ENCODE measurements at regions of chr1 and their contacts with region 1.

Region 1: DNA sequence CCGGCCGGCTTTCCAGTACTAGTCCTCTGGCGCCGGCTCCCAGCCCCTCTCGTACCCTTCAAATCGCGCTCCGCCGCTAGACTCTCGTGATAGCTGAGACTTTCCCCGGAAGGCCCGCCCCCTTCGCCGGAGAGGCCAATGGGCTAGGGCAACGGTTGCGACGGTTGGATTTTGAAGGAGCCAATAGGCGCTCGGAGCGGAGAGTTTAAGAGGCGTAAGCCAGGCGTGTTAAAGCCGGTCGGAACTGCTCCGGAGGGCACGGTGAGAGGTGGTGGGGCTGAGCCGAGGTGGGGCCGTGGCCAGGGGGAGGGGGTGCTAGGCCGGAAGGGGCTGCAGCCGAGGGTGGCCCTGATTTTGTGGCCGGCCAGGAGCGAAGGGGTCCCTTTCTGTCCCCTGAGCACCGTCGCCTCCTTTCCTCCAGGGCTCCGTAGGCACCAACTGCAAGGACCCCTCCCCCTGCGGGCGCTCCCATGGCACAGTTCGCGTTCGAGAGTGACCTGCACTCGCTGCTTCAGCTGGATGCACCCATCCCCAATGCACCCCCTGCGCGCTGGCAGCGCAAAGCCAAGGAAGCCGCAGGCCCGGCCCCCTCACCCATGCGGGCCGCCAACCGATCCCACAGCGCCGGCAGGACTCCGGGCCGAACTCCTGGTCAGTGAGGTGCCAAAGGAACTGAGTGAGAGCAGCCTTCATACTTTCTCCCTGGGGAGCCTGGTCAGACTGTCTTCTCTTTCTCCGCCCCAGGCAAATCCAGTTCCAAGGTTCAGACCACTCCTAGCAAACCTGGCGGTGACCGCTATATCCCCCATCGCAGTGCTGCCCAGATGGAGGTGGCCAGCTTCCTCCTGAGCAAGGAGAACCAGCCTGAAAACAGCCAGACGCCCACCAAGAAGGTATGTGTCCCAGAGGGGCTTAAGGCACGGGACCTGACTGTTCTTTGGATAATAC is at the start of gene CDC20:
- DNase-seq: peak; percentile 95
- ATAC-seq: peak; percentile 99
- H3K4me3 ChIP-seq: peak within 1 kb of the TSS; percentile 69 to 81 (median 73)
- H3K4me3 Mint-ChIP-seq: peak within 1 kb of the TSS; percentile 89
- H3K27ac ChIP-seq: peak within 1 kb of the TSS; percentile 48 to 79
- H3K27ac Mint-ChIP-seq: peak within 1 kb of the TSS; percentile 81
- H3K4me1 ChIP-seq: peaks cover 9 to 15% of the 10 kb centered on the region in 2 donors
- H3K4me1 Mint-ChIP-seq: peaks cover 18% of the 10 kb centered on the region
- H3K27me3 ChIP-seq: no peaks in the 10 kb centered on the region
- H3K27me3 Mint-ChIP-seq: no peaks in the 10 kb centered on the region
- CTCF ChIP-seq: no peak
- total RNA-seq, gene CDC20: 1.1 and 2.1 TPM in 2 replicates

Region 2: GRCh38 chr1:42657971-42658879 is 700.8 kb before region 1 on chr1 and contains the start of gene PPIH:
- CTCF ChIA-PET with region 1: no interaction called
- POLR2A ChIA-PET with region 1: no interaction called
- intact Hi-C with region 1: loop called (anchors 5 kb)
- DNase-seq: peak; percentile 94
- ATAC-seq: peak; percentile 99
- H3K4me3 ChIP-seq: peak within 1 kb of the TSS; percentile 45 to 90 (median 84)
- H3K4me3 Mint-ChIP-seq: peak within 1 kb of the TSS; percentile 99
- H3K27ac ChIP-seq: peak within 1 kb of the TSS; percentile 62 to 76
- H3K27ac Mint-ChIP-seq: peak within 1 kb of the TSS; percentile 93
- H3K4me1 ChIP-seq: peaks cover 15 to 22% of the 10 kb centered on the region in 2 donors
- H3K4me1 Mint-ChIP-seq: peaks cover 32% of the 10 kb centered on the region
- H3K27me3 ChIP-seq: no peaks in the 10 kb centered on the region
- H3K27me3 Mint-ChIP-seq: no peaks in the 10 kb centered on the region
- CTCF ChIP-seq: no peak
- total RNA-seq, gene PPIH: 48.8 and 50.3 TPM in 2 replicates

Region 3: GRCh38 chr1:43348809-43349583 is 10.0 kb before region 1 on chr1:
- CTCF ChIA-PET with region 1: interaction called, 4 read pairs
- POLR2A ChIA-PET with region 1: interaction called, 6 read pairs
- intact Hi-C with region 1: loop called (anchors 1 kb)
- DNase-seq: peak; percentile 78
- ATAC-seq: peak; percentile 84
- H3K4me3 ChIP-seq: peak overlapping the region in 4 of 5 experiments; percentile 34 to 64 (median 46)
- H3K4me3 Mint-ChIP-seq: peak overlapping the region; percentile 89
- H3K27ac ChIP-seq: peak overlapping the region; percentile 80 to 87
- H3K27ac Mint-ChIP-seq: peak overlapping the region; percentile 97
- H3K4me1 ChIP-seq: peaks cover 4 to 5% of the 10 kb centered on the region in 2 donors
- H3K4me1 Mint-ChIP-seq: peaks cover 13% of the 10 kb centered on the region
- H3K27me3 ChIP-seq: no peaks in the 10 kb centered on the region
- H3K27me3 Mint-ChIP-seq: no peaks in the 10 kb centered on the region
- CTCF ChIP-seq: no peak

Region 4: GRCh38 chr1:43414634-43415223 is 55.7 kb after region 1 on chr1:
- CTCF ChIA-PET with region 1: interaction called, 12 read pairs
- POLR2A ChIA-PET with region 1: interaction called, 4 read pairs
- intact Hi-C with region 1: no loop called
- DNase-seq: peak; percentile 79
- ATAC-seq: peak; percentile 96
- H3K4me3 ChIP-seq: no peak overlapping the region
- H3K4me3 Mint-ChIP-seq: no peak overlapping the region
- H3K27ac ChIP-seq: no peak overlapping the region
- H3K27ac Mint-ChIP-seq: peak overlapping the region; percentile 34
- H3K4me1 ChIP-seq: no peaks in the 10 kb centered on the region
- H3K4me1 Mint-ChIP-seq: peaks cover 3% of the 10 kb centered on the region
- H3K27me3 ChIP-seq: no peaks in the 10 kb centered on the region
- H3K27me3 Mint-ChIP-seq: no peaks in the 10 kb centered on the region
- CTCF ChIP-seq: peak; percentile 79

Region 5: GRCh38 chr1:43531906-43532584 is 173.0 kb after region 1 on chr1:
- CTCF ChIA-PET with region 1: no interaction called
- POLR2A ChIA-PET with region 1: no interaction called
- intact Hi-C with region 1: no loop called
- DNase-seq: no peak
- ATAC-seq: no peak
- H3K4me3 ChIP-seq: peak overlapping the region in 3 of 5 experiments; percentile 35 to 45 (median 41)
- H3K4me3 Mint-ChIP-seq: peak overlapping the region; percentile 87
- H3K27ac ChIP-seq: no peak overlapping the region
- H3K27ac Mint-ChIP-seq: no peak overlapping the region
- H3K4me1 ChIP-seq: peaks cover 13 to 18% of the 10 kb centered on the region in 2 donors
- H3K4me1 Mint-ChIP-seq: peaks cover 16% of the 10 kb centered on the region
- H3K27me3 ChIP-seq: peaks cover 0 to 33% (median 22%) of the 10 kb centered on the region in 4 experiments
- H3K27me3 Mint-ChIP-seq: peaks cover 51% of the 10 kb centered on the region
- CTCF ChIP-seq: no peak

Region 6: DNA sequence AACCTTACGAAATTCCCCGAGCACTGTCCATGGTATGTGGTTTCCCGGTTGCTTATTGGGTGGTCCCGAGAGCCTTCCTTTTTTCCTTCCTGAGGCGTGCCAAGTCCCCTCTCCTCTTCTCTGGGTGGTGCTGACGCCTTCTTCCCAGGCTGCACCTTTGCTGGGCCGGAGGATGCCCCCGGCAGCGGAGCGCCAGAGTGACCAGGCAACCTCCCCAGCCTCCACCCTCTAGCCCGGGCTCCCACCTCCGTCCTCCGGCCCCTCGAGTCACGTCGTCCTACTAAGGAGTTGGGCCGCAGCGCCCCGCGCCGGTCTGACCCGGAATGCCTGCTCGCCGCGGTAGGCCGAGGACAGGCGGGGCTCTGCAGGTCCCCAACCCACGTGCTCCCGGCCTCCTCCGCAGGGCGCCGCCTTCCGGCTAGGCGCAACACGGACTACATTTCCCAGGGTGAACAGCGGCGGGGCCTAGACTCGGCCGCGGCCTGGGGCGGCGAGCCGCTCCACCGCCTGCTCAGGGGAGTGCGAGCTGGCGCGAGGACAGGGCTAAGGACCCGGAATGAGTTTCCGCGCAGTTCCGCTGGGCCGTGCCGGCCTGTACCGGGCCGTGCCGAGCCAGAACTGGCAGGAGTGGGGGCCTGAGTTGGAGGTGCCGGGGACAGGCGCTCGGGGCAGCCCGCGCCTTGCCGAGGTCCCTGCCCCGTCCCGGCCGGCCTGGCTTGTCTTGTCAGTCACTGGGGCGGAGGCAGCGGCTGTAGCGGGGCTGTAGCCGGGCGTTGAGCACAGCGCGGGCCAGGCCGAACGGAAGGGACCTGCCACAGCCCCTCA is 587.4 kb after region 1 on chr1 and contains the start of gene IPO13:
- CTCF ChIA-PET with region 1: no interaction called
- POLR2A ChIA-PET with region 1: no interaction called
- intact Hi-C with region 1: loop called (anchors 1 kb)
- DNase-seq: peak; percentile 98
- ATAC-seq: peak; percentile 94
- H3K4me3 ChIP-seq: peak within 1 kb of the TSS; percentile 64 to 90 (median 78)
- H3K4me3 Mint-ChIP-seq: peak within 1 kb of the TSS; percentile 93
- H3K27ac ChIP-seq: peak within 1 kb of the TSS; percentile 95
- H3K27ac Mint-ChIP-seq: peak within 1 kb of the TSS; percentile 98
- H3K4me1 ChIP-seq: peaks cover 15 to 25% of the 10 kb centered on the region in 2 donors
- H3K4me1 Mint-ChIP-seq: peaks cover 39% of the 10 kb centered on the region
- H3K27me3 ChIP-seq: no peaks in the 10 kb centered on the region
- H3K27me3 Mint-ChIP-seq: no peaks in the 10 kb centered on the region
- CTCF ChIP-seq: peak; percentile 71
- total RNA-seq, gene IPO13: 17.1 and 19.7 TPM in 2 replicates